Activated T-helper 1 cell treated with anti-CD3 and anti-CD28 coated beads, Interleukin-12 subunit alpha, Interleukin-12 subunit beta, Interleukin-2, Interleukin-4 antibody, amounts not matched to agents 30 ng/mL and 10 ng/mL and 1 ng/mL, durations not matched to agents 14 hours and 24 hours and 36 hours (primary cell): ENCODE measurements at regions of chr5 and their contacts with region 1.

Region 1: GRCh38 chr5:95110118-95110517 is 174.8 kb downstream of the MCTP1 start:
- DNase-seq: no peak
- H3K4me3 Mint-ChIP-seq: no peak overlapping the region
- H3K27ac Mint-ChIP-seq: no peak overlapping the region
- H3K4me1 Mint-ChIP-seq: no peaks in the 10 kb centered on the region
- H3K27me3 Mint-ChIP-seq: no peaks in the 10 kb centered on the region

Region 2: GRCh38 chr5:94901191-94901979 is 208.7 kb before region 1 on chr5:
- intact Hi-C with region 1: no loop called
- DNase-seq: no peak
- H3K4me3 Mint-ChIP-seq: no peak overlapping the region
- H3K27ac Mint-ChIP-seq: no peak overlapping the region
- H3K4me1 Mint-ChIP-seq: no peaks in the 10 kb centered on the region
- H3K27me3 Mint-ChIP-seq: peaks cover 1% of the 10 kb centered on the region

Region 3: GRCh38 chr5:95068289-95068910 is 41.7 kb before region 1 on chr5:
- intact Hi-C with region 1: no loop called
- DNase-seq: no peak
- H3K4me3 Mint-ChIP-seq: no peak overlapping the region
- H3K27ac Mint-ChIP-seq: no peak overlapping the region
- H3K4me1 Mint-ChIP-seq: peaks cover 6% of the 10 kb centered on the region
- H3K27me3 Mint-ChIP-seq: peaks cover 3% of the 10 kb centered on the region

Region 4: GRCh38 chr5:95130941-95131340 is 20.8 kb after region 1 on chr5:
- intact Hi-C with region 1: loop called (anchors 1 kb)
- DNase-seq: no peak
- H3K4me3 Mint-ChIP-seq: no peak overlapping the region
- H3K27ac Mint-ChIP-seq: no peak overlapping the region
- H3K4me1 Mint-ChIP-seq: no peaks in the 10 kb centered on the region
- H3K27me3 Mint-ChIP-seq: no peaks in the 10 kb centered on the region

Region 5: GRCh38 chr5:95543017-95543705 is 433.0 kb after region 1 on chr5:
- intact Hi-C with region 1: no loop called
- DNase-seq: no peak
- H3K4me3 Mint-ChIP-seq: no peak overlapping the region
- H3K27ac Mint-ChIP-seq: no peak overlapping the region
- H3K4me1 Mint-ChIP-seq: peaks cover 6% of the 10 kb centered on the region
- H3K27me3 Mint-ChIP-seq: no peaks in the 10 kb centered on the region